ENCODE measurements at regions of chr2 and their contacts with region 1.

Region 1: GRCh38 chr2:44369392-44369791 is 7.6 kb downstream of the CAMKMT start:
- DNase-seq: no peak
- ATAC-seq: no peak
- H3K4me3 Mint-ChIP-seq: no peak overlapping the region
- H3K27ac Mint-ChIP-seq: no peak overlapping the region
- H3K4me1 Mint-ChIP-seq: peaks cover 1% of the 10 kb centered on the region
- H3K27me3 Mint-ChIP-seq: no peaks in the 10 kb centered on the region
- CTCF ChIP-seq: no peak

Region 2: GRCh38 chr2:44620189-44620990 is 251.0 kb after region 1 on chr2:
- CTCF ChIA-PET with region 1: no interaction called
- POLR2A ChIA-PET with region 1: interaction called, 14 read pairs
- intact Hi-C with region 1: no loop called
- DNase-seq: no peak
- ATAC-seq: no peak
- H3K4me3 Mint-ChIP-seq: no peak overlapping the region
- H3K27ac Mint-ChIP-seq: no peak overlapping the region
- H3K4me1 Mint-ChIP-seq: no peaks in the 10 kb centered on the region
- H3K27me3 Mint-ChIP-seq: no peaks in the 10 kb centered on the region
- CTCF ChIP-seq: no peak

Measured in activated B cell treated with CpG ODN at 0.5 μM for 24 hours (primary cell).